ENCODE measurements at regions of chr1 and their contacts with region 1.

Region 1: GRCh38 chr1:28877132-28877781 is 37.1 kb upstream of the EPB41 start:
- DNase-seq: peak; percentile 83
- ATAC-seq: peak; percentile 63
- H3K4me3 Mint-ChIP-seq: no peak overlapping the region
- H3K27ac Mint-ChIP-seq: no peak overlapping the region
- H3K4me1 Mint-ChIP-seq: peaks cover 6% of the 10 kb centered on the region
- H3K27me3 Mint-ChIP-seq: no peaks in the 10 kb centered on the region
- CTCF ChIP-seq: peak; percentile 93

Region 2: DNA sequence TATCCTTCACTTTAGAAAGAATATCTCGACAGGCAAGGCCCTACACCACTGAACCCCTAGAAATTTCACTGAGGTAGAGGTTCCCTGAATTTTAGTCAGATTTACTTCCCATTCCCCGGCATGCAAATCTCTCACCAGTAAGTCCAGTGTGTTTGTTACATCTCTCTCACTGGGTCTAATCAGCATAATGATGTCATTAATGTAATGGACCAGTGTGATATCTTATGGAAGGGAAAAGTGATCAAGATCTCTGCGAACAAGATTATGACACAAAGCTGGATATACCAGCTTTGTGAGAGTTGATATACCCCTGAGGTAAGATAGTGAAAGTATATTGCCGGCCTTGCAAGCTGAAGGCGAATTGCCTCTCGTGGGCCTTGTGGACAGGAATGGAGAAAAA is 220.9 kb before region 1 on chr1:
- CTCF ChIA-PET with region 1: interaction called, 10 read pairs
- POLR2A ChIA-PET with region 1: no interaction called
- DNase-seq: no peak
- ATAC-seq: no peak
- H3K4me3 Mint-ChIP-seq: no peak overlapping the region
- H3K27ac Mint-ChIP-seq: no peak overlapping the region
- H3K4me1 Mint-ChIP-seq: no peaks in the 10 kb centered on the region
- H3K27me3 Mint-ChIP-seq: no peaks in the 10 kb centered on the region
- CTCF ChIP-seq: no peak

Region 3: GRCh38 chr1:28775121-28775944 is 101.9 kb before region 1 on chr1:
- CTCF ChIA-PET with region 1: interaction called, 29 read pairs
- POLR2A ChIA-PET with region 1: interaction called, 7 read pairs
- DNase-seq: peak; percentile 77
- ATAC-seq: peak; percentile 91
- H3K4me3 Mint-ChIP-seq: peak overlapping the region; percentile 69
- H3K27ac Mint-ChIP-seq: peak overlapping the region; percentile 88
- H3K4me1 Mint-ChIP-seq: 0 out of 2 replicates have a peak, but pooled peaks cover 3% of the 10 kb centered on the region
- H3K27me3 Mint-ChIP-seq: no peaks in the 10 kb centered on the region
- CTCF ChIP-seq: no peak

Region 4: DNA sequence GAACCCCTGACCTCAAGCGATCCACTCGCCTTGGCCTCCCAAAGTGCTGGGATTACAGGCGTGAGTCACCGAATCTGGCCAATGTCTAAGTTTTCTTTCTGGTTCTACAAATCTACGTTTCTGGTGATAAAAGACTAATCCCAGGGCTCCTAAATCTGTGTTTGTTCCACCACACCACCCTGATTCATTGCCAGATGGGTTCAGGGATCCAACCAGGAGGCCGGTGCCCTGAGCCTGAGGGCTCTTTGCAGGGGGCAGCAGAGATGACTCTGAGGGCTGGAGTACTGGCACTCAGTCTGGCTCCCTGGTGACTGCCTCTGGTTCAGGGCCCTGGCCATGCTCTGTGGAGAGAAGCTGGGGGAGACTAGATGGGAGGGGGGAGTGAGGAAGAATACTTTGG is 75.8 kb before region 1 on chr1:
- CTCF ChIA-PET with region 1: interaction called, 100 read pairs
- POLR2A ChIA-PET with region 1: no interaction called
- DNase-seq: no peak
- ATAC-seq: no peak; the same call in 1 of the 2 replicates
- H3K4me3 Mint-ChIP-seq: no peak overlapping the region
- H3K27ac Mint-ChIP-seq: no peak overlapping the region
- H3K4me1 Mint-ChIP-seq: peaks cover 34% of the 10 kb centered on the region
- H3K27me3 Mint-ChIP-seq: no peaks in the 10 kb centered on the region
- CTCF ChIP-seq: no peak

Region 5: DNA sequence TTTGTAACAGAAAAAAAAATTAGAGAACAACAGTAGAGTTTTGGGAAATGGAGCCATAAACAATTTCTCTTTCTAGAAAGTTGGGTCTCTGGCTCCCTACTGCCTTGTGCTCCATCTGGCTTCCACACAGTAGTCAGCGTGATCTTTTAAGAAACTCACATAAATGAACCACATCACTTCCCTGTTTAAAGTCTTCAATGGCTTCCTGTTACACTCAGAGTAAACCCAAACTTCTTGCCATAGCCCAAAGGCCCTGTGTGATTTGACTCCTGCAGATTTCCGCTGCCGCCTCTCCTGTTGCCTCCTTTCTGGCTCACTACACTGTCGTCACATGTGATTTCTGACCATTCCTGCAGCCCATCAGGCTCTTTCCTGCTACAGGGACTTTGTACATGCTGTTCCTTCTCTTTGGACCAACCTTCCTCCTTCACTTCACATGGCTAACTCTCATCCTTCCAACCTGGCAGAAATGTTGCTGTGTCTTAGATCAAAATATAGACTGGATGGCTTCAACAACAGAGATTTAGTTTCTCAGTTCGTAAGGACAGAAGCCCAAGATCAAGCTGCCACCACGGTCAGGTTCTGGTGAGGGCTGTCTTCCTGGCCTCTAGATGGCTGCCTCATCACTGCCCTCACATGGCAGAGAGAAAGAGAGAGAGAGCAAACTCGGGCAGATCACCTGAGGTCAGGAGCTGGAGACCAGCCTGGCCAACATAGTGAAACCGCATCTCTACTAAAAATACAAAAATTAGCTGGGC is 31.3 kb before region 1 on chr1:
- CTCF ChIA-PET with region 1: interaction called, 31 read pairs
- POLR2A ChIA-PET with region 1: no interaction called
- DNase-seq: peak; percentile 41
- ATAC-seq: peak; percentile 98
- H3K4me3 Mint-ChIP-seq: no peak overlapping the region
- H3K27ac Mint-ChIP-seq: peak overlapping the region; percentile 47
- H3K4me1 Mint-ChIP-seq: peaks cover 4% of the 10 kb centered on the region
- H3K27me3 Mint-ChIP-seq: no peaks in the 10 kb centered on the region
- CTCF ChIP-seq: no peak

Region 6: DNA sequence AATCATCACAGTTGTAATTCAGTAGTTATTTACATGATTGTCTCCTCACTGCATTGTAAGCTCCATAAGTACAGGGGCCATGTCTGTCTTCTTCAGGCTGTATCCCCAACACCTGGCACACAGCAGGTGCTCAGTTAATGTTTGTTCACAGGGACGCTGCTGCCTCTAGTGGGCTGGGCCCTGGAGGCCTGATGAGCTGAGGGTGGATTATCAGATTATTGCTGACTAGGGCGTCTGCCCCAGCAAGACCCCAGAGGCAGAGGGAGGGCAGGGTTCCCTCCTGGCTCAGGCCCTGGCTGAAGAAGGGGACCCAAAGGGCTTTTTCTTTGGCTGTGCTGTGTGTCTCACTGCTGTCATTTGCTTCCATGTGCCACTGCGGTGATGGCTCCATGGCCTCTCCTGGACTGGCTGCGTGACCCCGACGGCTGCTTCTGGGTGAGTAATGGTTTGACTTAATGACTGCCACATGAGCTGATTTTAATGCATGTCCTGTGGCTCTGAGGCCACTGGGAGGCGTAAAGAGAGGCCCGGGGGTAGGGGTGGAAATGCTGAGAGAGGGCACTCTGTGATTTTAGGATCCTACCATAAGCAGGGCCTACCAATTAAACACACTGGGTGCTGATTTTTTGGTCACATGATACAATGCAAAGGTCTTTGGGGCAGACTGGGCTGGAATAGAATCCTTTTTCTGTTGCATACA is 16.3 kb after region 1 on chr1:
- CTCF ChIA-PET with region 1: interaction called, 20 read pairs
- POLR2A ChIA-PET with region 1: no interaction called
- DNase-seq: peak; percentile 64
- ATAC-seq: peak; percentile 87
- H3K4me3 Mint-ChIP-seq: no peak overlapping the region
- H3K27ac Mint-ChIP-seq: peak overlapping the region; percentile 71; the same call in 1 of the 2 replicates
- H3K4me1 Mint-ChIP-seq: peaks cover 16% of the 10 kb centered on the region
- H3K27me3 Mint-ChIP-seq: peaks cover 6% of the 10 kb centered on the region; the same call in 1 of the 2 replicates
- CTCF ChIP-seq: peak; percentile 35; the same call in 1 of the 2 replicates

Region 7: DNA sequence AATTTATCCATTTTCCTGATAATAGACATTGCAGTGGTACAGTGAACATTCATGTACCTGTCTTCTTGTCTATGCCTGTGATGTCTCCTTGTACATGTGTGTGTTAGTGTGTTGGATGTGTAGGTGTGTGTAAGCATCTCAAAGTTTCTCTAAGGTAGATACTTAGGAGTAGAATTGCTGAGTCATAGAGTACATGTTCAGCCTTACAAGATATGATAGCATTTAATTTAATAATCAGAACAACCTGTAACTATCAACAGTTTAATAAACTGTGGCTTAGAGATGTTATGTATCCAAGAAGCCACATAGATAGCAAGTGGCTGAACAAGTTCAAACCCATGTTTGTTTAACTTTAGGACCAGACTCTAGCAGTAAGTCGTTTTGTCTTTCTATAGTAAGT is 72.7 kb after region 1 on chr1:
- CTCF ChIA-PET with region 1: no interaction called
- POLR2A ChIA-PET with region 1: no interaction called
- DNase-seq: no peak
- ATAC-seq: no peak
- H3K4me3 Mint-ChIP-seq: no peak overlapping the region
- H3K27ac Mint-ChIP-seq: peak overlapping the region; percentile 38
- H3K4me1 Mint-ChIP-seq: peaks cover 15% of the 10 kb centered on the region
- H3K27me3 Mint-ChIP-seq: no peaks in the 10 kb centered on the region
- CTCF ChIP-seq: no peak